Heart left ventricle (tissue), 16 donors: ENCODE measurements at regions of chr12 and their contacts with region 1.

Region 1: GRCh38 chr12:109477185-109477962 is at the starts of genes KCTD10 and UBE3B:
- DNase-seq: peak; percentile 91 to 93 (median 92)
- ATAC-seq: peak; percentile 98 to 99 (median 98)
- H3K4me3 ChIP-seq: peak within 1 kb of the TSS; percentile 59 to 92 (median 82)
- H3K27ac ChIP-seq: peak within 1 kb of the TSS; percentile 91 to 99 (median 98)
- H3K4me1 ChIP-seq: peaks cover 12 to 65% (median 43%) of the 10 kb centered on the region in 12 donors
- H3K27me3 ChIP-seq: no peaks in the 10 kb centered on the region
- CTCF ChIP-seq: peak in 4 of 12 donors; percentile 9 to 26 (median 20)
- POLR2A ChIP-seq: peak in 1 of 2 donors; percentile 50
- total RNA-seq, gene KCTD10: 20.8 to 52.3 (median 37.1) TPM
- total RNA-seq, gene UBE3B: 45.7 to 82.7 (median 53.8) TPM

Region 2: DNA sequence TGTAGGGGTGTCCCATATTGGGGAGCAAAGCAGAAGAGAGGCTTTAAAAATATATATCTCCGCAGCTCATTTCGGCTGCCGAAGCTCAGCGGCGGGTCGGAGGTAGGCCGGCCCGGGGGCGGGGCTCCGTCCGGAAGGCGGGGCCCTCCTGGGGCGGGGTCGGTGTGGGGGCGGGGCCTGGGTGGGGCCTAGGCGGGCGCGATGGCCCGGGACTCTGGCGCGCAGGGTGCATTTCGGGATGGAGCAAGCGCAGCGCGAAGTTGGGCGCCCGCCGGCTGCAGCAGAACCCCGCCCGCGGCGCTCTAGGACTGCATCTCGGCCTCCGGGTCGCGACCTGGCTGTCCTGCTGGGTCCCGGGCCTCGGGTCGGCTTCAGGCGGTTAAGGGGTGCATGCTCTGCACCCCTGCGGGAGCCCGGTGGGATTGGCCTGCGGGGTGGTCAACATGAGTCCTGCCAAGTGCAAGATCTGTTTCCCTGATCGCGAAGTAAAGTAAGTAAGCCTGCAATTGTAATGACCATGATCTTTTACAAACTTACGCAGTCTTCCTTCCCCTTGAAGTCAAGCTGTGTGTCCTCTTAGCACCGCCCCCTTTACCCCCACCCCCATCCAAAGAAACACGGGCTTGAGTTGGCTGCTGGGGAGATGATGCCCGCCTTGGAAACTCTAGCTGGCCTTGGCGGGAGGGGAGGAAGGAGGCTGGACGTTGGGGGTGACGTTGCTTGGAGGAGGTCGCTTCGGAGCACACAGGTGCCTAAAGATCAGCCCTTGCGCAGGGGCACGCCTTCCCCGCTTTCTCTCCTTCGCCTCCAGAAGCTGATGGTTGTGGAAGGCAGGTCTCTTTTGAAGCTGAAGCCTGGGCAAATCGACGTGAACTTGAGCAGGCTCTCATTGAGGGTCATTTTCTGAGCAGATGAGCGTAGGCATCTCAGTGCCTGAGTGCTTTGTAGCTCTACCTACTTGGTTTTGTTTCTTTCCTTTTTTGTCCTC is 322.6 kb before region 1 on chr12:
- intact Hi-C with region 1: no loop called
- DNase-seq: peak; percentile 86 to 92 (median 90)
- ATAC-seq: peak; percentile 89 to 97 (median 94)
- H3K4me3 ChIP-seq: peak overlapping the region; percentile 28 to 82 (median 68)
- H3K27ac ChIP-seq: peak overlapping the region; percentile 67 to 93 (median 80)
- H3K4me1 ChIP-seq: peaks cover 5 to 66% (median 46%) of the 10 kb centered on the region in 12 donors
- H3K27me3 ChIP-seq: no peaks in the 10 kb centered on the region
- CTCF ChIP-seq: peak in 1 of 12 donors; percentile 14
- POLR2A ChIP-seq: peak in 1 of 2 donors; percentile 52

Region 3: GRCh38 chr12:109462710-109463692 is 14.4 kb before region 1 on chr12:
- intact Hi-C with region 1: loop called in 1 of 10 experiments (anchors 1 kb)
- DNase-seq: peak; percentile 80 to 92 (median 86)
- ATAC-seq: peak; percentile 72 to 85 (median 76)
- H3K4me3 ChIP-seq: peak overlapping the region in 9 of 12 donors; percentile 8 to 38 (median 29)
- H3K27ac ChIP-seq: peak overlapping the region; percentile 89 to 100 (median 96)
- H3K4me1 ChIP-seq: peaks cover 61 to 100% (median 96%) of the 10 kb centered on the region in 12 donors
- H3K27me3 ChIP-seq: no peaks in the 10 kb centered on the region
- CTCF ChIP-seq: peak in 1 of 12 donors; percentile 4
- POLR2A ChIP-seq: no peak

Region 4: GRCh38 chr12:109573029-109573913 is 95.9 kb after region 1 on chr12 and contains the starts of genes MMAB and MVK:
- intact Hi-C with region 1: loop called in 1 of 10 experiments (anchors 5 kb)
- DNase-seq: peak; percentile 99
- ATAC-seq: peak; percentile 98 to 99 (median 98)
- H3K4me3 ChIP-seq: peak within 1 kb of the TSS; percentile 60 to 93 (median 74)
- H3K27ac ChIP-seq: peak within 1 kb of the TSS; percentile 47 to 92 (median 82)
- H3K4me1 ChIP-seq: peaks cover 0 to 26% (median 18%) of the 10 kb centered on the region in 12 donors
- H3K27me3 ChIP-seq: no peaks in the 10 kb centered on the region
- CTCF ChIP-seq: no peak
- POLR2A ChIP-seq: peak in 1 of 2 donors; percentile 50
- total RNA-seq, gene MMAB: 29.5 to 43.3 (median 34.4) TPM
- total RNA-seq, gene MVK: 7.9 to 14.9 (median 10.1) TPM